ENCODE measurements at regions of chr7 and their contacts with region 1.

Region 1: GRCh38 chr7:43454936-43455518 is 127.9 kb upstream of the STK17A start:
- DNase-seq: peak; percentile 3
- H3K4me3 ChIP-seq: no peak overlapping the region
- CTCF ChIP-seq: peak; percentile 29

Region 2: DNA sequence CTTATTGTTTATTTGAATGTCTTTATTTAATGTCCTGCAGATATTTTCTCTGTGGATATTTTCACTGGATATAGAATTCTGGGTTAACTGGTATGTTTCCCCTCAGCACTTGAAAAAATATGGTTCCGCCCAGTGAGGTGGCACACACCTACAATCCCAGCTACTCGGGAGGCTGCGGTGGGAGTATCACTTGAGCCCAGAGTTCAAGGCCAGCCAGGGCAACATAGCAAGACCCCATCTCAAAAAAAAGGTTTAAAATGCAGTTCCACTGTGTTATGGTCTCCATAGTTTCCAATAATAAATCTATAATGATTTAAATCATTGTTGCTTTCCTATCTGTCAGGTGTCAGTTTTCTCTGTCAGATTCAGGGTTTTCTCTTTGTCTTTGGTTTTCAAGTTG is 37.6 kb before region 1 on chr7:
- CTCF ChIA-PET with region 1: no interaction called
- POLR2A ChIA-PET with region 1: no interaction called
- DNase-seq: no peak
- H3K4me3 ChIP-seq: no peak overlapping the region
- CTCF ChIP-seq: no peak

Region 3: DNA sequence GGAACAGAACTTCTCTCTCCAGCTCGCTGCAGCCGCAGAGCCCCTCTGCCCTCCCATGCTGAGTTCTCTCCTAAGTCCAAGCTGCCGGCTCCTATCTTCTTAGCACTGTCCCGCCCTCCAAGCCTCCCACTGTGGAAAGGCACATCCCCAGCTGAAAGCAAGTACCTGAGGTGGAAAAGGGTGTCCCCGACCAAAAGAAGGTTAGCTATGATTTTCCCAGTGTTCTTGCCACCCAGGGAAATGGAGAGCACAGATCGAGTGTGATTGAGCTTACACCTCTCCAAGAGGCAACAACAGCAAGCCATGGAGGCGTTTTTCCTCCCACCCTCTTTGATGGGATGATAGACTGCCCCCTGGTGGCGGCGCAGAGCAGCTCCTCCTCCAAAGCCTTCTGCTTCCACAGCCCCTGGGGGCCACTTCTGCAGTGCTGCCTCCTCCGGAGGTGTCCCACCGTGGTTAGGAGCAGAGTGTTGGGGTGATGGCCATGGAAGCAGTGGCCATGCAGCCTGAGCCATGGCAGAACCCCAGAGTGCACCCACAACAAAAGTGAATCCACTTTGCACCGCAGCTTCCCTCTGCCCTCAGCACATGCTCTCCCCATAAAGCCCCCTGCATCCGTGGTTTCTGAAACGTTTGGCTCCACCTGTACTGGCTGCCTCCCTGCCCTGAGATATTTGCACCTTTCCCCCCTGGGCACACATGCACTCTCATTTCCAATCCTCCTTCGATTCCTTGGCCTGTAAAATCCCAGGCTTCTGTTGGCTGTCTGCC is 15.2 kb before region 1 on chr7:
- CTCF ChIA-PET with region 1: interaction called, 23 read pairs
- POLR2A ChIA-PET with region 1: no interaction called
- DNase-seq: no peak
- H3K4me3 ChIP-seq: no peak overlapping the region
- CTCF ChIP-seq: peak; percentile 78

Measured in AG04449 (cell line).